ENCODE measurements at regions of chr17 and their contacts with region 1.

Region 1: DNA sequence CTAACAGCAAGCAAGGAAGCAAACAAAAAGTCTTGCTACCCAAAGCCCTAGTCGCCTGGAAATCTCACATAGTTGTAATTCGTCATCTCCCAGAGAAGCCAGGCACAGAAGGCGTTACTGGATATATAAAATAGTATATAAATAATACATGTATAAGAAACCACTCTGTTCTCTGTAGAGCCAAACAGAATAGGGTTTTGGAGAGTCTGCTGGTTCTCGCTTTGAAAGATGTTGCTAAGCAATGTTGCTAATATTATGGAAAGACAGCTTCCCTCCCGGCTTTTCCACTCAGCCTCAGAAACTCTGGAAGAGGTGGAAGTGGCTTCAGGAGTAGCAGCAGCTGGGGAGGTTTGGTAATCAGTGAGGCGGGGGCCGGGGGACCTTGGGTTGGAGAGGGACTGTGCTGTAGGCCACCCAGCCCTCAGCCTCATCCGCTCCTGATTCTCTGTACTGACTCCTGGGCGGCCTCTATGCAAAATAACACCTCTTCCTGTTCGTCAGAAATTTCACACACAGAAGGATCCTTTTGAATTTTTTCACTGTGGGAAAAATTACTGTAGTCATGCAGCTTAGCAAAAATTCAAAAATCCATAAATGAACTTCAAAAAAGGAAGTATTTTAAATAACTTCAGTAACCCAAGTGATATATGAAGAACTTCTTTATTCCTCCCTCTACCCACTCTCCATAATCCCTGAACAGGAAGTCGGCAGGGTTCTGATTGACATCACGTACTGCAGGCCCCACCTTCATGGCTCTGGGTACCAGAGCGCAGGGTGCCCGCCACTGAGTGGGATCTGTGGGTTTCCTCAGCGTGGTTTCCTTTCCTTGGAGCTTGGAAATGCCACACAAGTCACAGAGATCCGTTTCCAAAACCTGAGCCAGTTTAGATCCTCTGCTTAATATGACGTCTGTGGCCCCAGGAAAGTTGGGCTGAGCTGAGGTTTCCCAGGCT is 51.4 kb downstream of the RAP1GAP2 start:
- DNase-seq: no peak

Region 2: GRCh38 chr17:2929881-2930533 is 82.3 kb after region 1 on chr17:
- intact Hi-C with region 1: loop called (anchors 5 kb)
- DNase-seq: no peak

Region 3: GRCh38 chr17:3012926-3013581 is 165.4 kb after region 1 on chr17:
- intact Hi-C with region 1: loop called (anchors 2 kb)
- DNase-seq: peak; percentile 81